Common myeloid progenitor, CD34-positive (primary cell): ENCODE measurements at regions of chr1 and their contacts with region 1.

Region 1: GRCh38 chr1:197614916-197615692 is 160.2 kb downstream of the DENND1B start:
- DNase-seq: peak; percentile 42 to 54 (median 52)
- H3K4me3 ChIP-seq: no peak overlapping the region
- H3K27ac ChIP-seq: no peak overlapping the region
- H3K4me1 ChIP-seq: no peaks in the 10 kb centered on the region
- H3K27me3 ChIP-seq: no peaks in the 10 kb centered on the region

Region 2: GRCh38 chr1:197515421-197515820 is 99.7 kb before region 1 on chr1:
- CTCF ChIA-PET with region 1: no interaction called
- POLR2A ChIA-PET with region 1: no interaction called
- DNase-seq: no peak
- H3K4me3 ChIP-seq: no peak overlapping the region
- H3K27ac ChIP-seq: no peak overlapping the region
- H3K4me1 ChIP-seq: no peaks in the 10 kb centered on the region
- H3K27me3 ChIP-seq: no peaks in the 10 kb centered on the region

Region 3: GRCh38 chr1:197868751-197869489 is 253.8 kb after region 1 on chr1:
- CTCF ChIA-PET with region 1: interaction called, 84 read pairs
- POLR2A ChIA-PET with region 1: no interaction called
- DNase-seq: peak; percentile 55 to 83 (median 80)
- H3K4me3 ChIP-seq: no peak overlapping the region
- H3K27ac ChIP-seq: no peak overlapping the region
- H3K4me1 ChIP-seq: no peaks in the 10 kb centered on the region
- H3K27me3 ChIP-seq: no peaks in the 10 kb centered on the region

Region 4: DNA sequence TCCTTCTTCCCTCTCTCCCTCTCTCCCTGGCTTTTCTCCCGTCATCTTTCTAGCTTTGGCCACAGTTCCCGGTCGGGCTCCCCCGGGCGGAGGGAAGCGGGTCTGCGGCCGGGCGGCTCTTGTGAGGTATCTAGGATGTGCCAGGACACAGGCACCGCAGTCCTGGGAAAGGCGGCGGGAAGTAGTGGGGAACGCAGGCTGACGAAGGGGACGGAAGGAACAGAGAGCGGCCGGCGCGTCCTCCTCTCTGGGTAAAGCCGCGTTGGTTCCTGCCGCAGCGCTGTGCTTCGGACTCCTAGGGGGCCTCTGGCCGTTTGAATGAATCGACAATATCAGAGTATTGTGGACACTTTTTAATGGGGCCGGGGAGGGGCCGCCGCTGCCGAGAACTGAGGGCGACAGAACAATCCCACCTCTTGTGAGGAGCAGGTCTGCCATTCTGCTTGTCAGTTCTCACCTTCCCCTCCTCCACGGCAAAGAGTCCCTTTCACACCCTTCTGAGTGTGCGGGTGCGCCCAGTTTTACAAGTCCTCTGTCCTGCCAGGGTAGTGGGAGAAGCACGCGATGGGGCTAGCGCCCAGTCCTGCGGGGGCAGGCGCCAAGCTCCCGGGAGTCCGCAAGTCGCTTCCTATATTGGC is 300.9 kb after region 1 on chr1:
- CTCF ChIA-PET with region 1: interaction called, 11 read pairs
- POLR2A ChIA-PET with region 1: no interaction called
- DNase-seq: peak in 1 of 3 donors; percentile 36
- H3K4me3 ChIP-seq: peak overlapping the region in 5 of 7 experiments; percentile 8 to 34 (median 15)
- H3K27ac ChIP-seq: no peak overlapping the region
- H3K4me1 ChIP-seq: peaks cover 2 to 63% (median 54%) of the 10 kb centered on the region in 4 experiments
- H3K27me3 ChIP-seq: peaks cover 20 to 100% (median 78%) of the 10 kb centered on the region in 5 experiments

Region 5: DNA sequence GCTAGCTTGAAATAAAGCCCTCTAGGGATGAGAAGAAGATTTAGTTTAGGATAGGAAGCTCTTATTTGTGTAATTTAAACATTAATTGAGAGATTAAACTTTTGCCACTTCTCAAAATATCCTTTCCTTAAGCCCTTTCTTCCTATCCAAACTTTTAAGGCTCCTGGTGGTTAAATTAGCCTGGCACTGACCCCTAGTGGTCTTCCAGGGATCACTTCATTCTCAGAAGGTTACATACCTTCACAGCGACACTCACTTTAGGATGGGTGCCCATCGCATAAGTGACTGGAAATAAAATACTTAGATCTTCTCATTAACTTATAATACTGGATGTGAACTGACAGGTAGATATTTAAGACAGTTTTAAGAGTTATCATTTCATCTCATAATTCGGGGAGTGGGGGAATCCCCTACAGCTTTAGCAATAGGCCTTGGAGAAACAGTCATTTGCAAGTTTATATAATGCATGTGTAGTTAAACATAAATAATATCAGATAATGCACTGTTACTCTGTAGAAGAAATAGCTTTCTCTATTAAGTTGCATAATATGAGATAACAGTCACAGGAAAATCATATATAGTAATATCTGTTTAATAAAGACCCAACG is 309.5 kb after region 1 on chr1:
- CTCF ChIA-PET with region 1: interaction called, 12 read pairs
- POLR2A ChIA-PET with region 1: no interaction called
- DNase-seq: peak; percentile 66 to 76 (median 75)
- H3K4me3 ChIP-seq: no peak overlapping the region
- H3K27ac ChIP-seq: no peak overlapping the region
- H3K4me1 ChIP-seq: peaks cover 0 to 18% (median 11%) of the 10 kb centered on the region in 4 experiments
- H3K27me3 ChIP-seq: peaks cover 22 to 94% (median 37%) of the 10 kb centered on the region in 5 experiments